IMR-90 (cell line): ENCODE measurements at regions of chr9 and their contacts with region 1.

Region 1: GRCh38 chr9:70902692-70903131 is 218.7 kb downstream of the TRPM3 start:
- DNase-seq: peak; percentile 96
- ATAC-seq: peak; percentile 98
- H3K4me3 ChIP-seq: no peak overlapping the region
- H3K27ac ChIP-seq: no peak overlapping the region
- H3K4me1 ChIP-seq: no peaks in the 10 kb centered on the region
- H3K27me3 ChIP-seq: peaks cover 21% of the 10 kb centered on the region; the same call in 1 of the 2 replicates
- CTCF ChIP-seq: no peak
- POLR2A ChIP-seq: no peak
- RAD21 ChIP-seq: no peak

Region 2: DNA sequence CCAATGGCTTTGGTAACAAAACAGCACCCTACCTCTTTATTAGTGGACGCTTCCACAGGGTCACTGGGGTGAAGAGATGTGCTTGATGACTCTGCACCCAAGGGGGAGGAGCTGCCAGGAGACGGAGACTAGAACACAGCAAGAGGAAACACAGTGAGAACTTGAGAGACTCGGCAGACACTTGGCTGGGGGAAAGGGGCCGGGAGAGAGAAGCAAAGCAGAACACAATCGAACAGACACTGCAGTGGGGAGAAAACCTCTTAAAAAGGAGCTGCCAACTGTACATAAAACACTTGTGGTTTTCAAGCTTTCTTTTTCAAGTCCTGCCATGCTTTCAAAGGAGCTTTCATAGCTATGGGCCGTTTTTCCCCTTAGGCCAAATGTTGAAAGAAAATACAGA is 1426.7 kb before region 1 on chr9:
- CTCF ChIA-PET with region 1: no interaction called
- POLR2A ChIA-PET with region 1: no interaction called
- dilution Hi-C with region 1: no loop called
- in situ Hi-C with region 1: no loop called
- intact Hi-C with region 1: no loop called
- DNase-seq: no peak
- ATAC-seq: no peak; the same call in 1 of the 2 replicates
- H3K4me3 ChIP-seq: no peak overlapping the region
- H3K27ac ChIP-seq: no peak overlapping the region
- H3K4me1 ChIP-seq: no peaks in the 10 kb centered on the region
- H3K27me3 ChIP-seq: no peaks in the 10 kb centered on the region
- CTCF ChIP-seq: no peak
- POLR2A ChIP-seq: no peak
- RAD21 ChIP-seq: no peak

Region 3: GRCh38 chr9:70888471-70888870 is 14.2 kb before region 1 on chr9:
- CTCF ChIA-PET with region 1: no interaction called
- POLR2A ChIA-PET with region 1: no interaction called
- dilution Hi-C with region 1: no loop called
- in situ Hi-C with region 1: no loop called
- intact Hi-C with region 1: no loop called
- DNase-seq: no peak
- ATAC-seq: no peak
- H3K4me3 ChIP-seq: no peak overlapping the region
- H3K27ac ChIP-seq: no peak overlapping the region
- H3K4me1 ChIP-seq: no peaks in the 10 kb centered on the region
- H3K27me3 ChIP-seq: peaks cover 6% of the 10 kb centered on the region
- CTCF ChIP-seq: no peak
- POLR2A ChIP-seq: no peak
- RAD21 ChIP-seq: no peak

Region 4: GRCh38 chr9:71025201-71025600 is 122.5 kb after region 1 on chr9:
- CTCF ChIA-PET with region 1: interaction called, 11 read pairs
- POLR2A ChIA-PET with region 1: no interaction called
- dilution Hi-C with region 1: no loop called
- in situ Hi-C with region 1: loop called (anchors 25 kb)
- intact Hi-C with region 1: no loop called
- DNase-seq: no peak
- ATAC-seq: no peak
- H3K4me3 ChIP-seq: no peak overlapping the region
- H3K27ac ChIP-seq: no peak overlapping the region
- H3K4me1 ChIP-seq: no peaks in the 10 kb centered on the region
- H3K27me3 ChIP-seq: no peaks in the 10 kb centered on the region
- CTCF ChIP-seq: no peak
- POLR2A ChIP-seq: no peak
- RAD21 ChIP-seq: no peak